ENCODE measurements at regions of chr2 and their contacts with region 1.

Region 1: DNA sequence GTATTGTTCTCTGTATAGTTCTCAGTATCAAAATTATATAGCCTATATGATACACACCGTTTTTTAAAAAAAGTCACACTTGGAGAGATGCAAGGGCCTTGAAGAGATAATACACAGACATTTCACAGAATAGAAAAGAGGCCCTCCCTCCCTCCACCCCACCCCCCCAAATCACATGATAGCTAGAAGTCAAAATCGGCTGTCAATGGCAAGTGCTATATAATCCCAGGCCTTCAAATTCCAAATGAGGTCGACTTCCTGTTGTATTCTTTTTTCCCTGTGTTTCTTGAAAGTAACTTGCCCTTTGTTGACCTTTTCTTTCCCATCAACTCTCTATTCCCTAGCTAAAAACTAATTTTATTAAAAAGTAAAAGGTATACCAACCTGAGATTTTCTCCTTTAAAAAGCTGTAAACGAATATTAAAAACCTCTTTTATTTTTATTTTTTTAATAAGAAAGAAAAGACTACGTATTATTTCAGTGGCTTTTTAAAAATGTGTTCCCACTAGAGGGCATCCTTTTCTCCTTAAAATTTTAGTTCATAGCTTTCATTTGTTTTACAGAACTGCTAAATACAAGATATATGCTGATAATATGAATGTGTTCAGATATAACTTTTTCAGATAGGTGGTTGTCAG is 46.6 kb downstream of the KCMF1 start:
- DNase-seq: no peak
- H3K4me3 ChIP-seq: no peak overlapping the region
- H3K27ac ChIP-seq: no peak overlapping the region
- H3K27me3 ChIP-seq: no peaks in the 10 kb centered on the region
- CTCF ChIP-seq: peak; percentile 49

Region 2: GRCh38 chr2:84865181-84865783 is 152.2 kb before region 1 on chr2:
- CTCF ChIA-PET with region 1: no interaction called
- POLR2A ChIA-PET with region 1: no interaction called
- DNase-seq: no peak
- H3K4me3 ChIP-seq: no peak overlapping the region
- H3K27ac ChIP-seq: no peak overlapping the region
- H3K27me3 ChIP-seq: no peaks in the 10 kb centered on the region
- CTCF ChIP-seq: 0 out of 2 replicates have a peak, but pooled peaks have one; percentile 15

Region 3: DNA sequence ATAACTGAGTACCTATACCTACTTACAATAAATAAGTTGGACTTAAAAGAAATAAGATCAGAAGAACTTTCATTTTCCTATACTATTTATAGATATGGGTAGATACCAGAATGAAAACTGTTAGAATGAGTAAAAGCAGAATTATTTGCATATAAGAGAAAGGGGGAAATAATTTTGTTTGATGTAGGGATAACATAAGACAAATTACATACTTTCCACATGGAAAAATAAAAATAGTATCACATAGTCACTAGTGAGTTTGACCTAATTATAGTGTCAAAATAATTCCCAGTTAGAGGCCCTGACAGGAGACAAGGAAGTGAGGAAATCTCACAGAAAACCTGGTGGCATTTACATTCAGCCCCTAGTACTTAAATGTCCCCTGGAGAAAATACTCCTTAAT is 18.0 kb before region 1 on chr2:
- CTCF ChIA-PET with region 1: interaction called, 14 read pairs
- POLR2A ChIA-PET with region 1: no interaction called
- DNase-seq: no peak
- H3K4me3 ChIP-seq: no peak overlapping the region
- H3K27ac ChIP-seq: no peak overlapping the region
- H3K27me3 ChIP-seq: no peaks in the 10 kb centered on the region
- CTCF ChIP-seq: no peak

Region 4: GRCh38 chr2:85032621-85033020 is 15.1 kb after region 1 on chr2:
- CTCF ChIA-PET with region 1: interaction called, 30 read pairs
- POLR2A ChIA-PET with region 1: no interaction called
- DNase-seq: no peak
- H3K4me3 ChIP-seq: no peak overlapping the region
- H3K27ac ChIP-seq: no peak overlapping the region
- H3K27me3 ChIP-seq: no peaks in the 10 kb centered on the region
- CTCF ChIP-seq: no peak

Region 5: GRCh38 chr2:85561317-85561979 is 543.9 kb after region 1 on chr2 and contains the start of gene GGCX:
- CTCF ChIA-PET with region 1: no interaction called
- POLR2A ChIA-PET with region 1: no interaction called
- DNase-seq: peak; percentile 83
- H3K4me3 ChIP-seq: peak within 1 kb of the TSS; percentile 92
- H3K27ac ChIP-seq: peak within 1 kb of the TSS; percentile 73
- H3K27me3 ChIP-seq: no peaks in the 10 kb centered on the region
- CTCF ChIP-seq: no peak
- polyA plus RNA-seq, gene GGCX: 44.0 and 53.8 TPM in 2 replicates